ENCODE measurements at regions of chr17 and their contacts with region 1.

Region 1: DNA sequence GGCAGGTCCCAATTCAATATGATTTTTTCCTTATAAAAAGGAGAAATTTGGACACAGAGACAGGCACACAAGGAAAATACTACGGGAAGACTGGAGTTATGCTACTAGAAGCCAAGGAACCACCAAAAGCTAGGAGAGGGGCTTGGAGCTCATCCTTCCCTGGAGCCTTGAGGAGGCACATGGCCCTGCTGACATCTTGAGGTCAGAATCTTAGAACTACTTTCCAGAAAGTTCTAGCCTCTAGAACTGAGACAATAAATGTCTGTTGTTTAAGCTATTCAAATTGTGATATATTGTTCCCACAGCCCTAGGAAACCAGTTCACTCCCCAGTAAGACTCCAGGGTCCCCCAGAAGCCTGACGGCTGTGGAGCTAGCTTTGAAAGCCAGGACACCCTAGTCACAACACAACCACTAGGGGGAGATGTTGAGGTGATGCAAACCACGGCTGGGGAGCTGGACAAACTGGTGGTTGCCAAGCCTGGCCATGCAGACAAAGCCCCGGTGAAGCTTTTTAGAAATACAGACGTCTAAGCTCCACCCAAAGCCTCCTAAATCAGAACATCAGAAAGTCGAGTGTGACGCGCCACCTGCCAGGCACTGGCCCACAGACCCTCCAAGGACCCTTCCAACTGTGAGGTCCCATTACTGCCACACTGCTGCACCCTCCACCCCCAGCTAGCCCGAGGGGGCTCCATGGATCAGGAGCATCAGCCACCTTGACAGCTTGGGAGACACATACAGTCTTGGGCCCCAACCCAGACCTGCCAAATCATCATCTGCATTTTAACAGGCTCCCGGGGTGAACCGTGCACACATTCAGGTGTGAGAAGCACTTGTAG is 106.4 kb downstream of the SLC39A11 start:
- DNase-seq: peak; percentile 7 to 72 (median 34)
- ATAC-seq: peak; percentile 41
- H3K4me3 ChIP-seq: no peak overlapping the region
- H3K4me3 Mint-ChIP-seq: no peak overlapping the region
- H3K27ac ChIP-seq: no peak overlapping the region
- H3K27ac Mint-ChIP-seq: no peak overlapping the region
- H3K4me1 ChIP-seq: peaks cover 6% of the 10 kb centered on the region
- H3K4me1 Mint-ChIP-seq: peaks cover 6% of the 10 kb centered on the region
- H3K27me3 ChIP-seq: no peaks in the 10 kb centered on the region
- H3K27me3 Mint-ChIP-seq: no peaks in the 10 kb centered on the region
- CTCF ChIP-seq: peak; percentile 78

Region 2: DNA sequence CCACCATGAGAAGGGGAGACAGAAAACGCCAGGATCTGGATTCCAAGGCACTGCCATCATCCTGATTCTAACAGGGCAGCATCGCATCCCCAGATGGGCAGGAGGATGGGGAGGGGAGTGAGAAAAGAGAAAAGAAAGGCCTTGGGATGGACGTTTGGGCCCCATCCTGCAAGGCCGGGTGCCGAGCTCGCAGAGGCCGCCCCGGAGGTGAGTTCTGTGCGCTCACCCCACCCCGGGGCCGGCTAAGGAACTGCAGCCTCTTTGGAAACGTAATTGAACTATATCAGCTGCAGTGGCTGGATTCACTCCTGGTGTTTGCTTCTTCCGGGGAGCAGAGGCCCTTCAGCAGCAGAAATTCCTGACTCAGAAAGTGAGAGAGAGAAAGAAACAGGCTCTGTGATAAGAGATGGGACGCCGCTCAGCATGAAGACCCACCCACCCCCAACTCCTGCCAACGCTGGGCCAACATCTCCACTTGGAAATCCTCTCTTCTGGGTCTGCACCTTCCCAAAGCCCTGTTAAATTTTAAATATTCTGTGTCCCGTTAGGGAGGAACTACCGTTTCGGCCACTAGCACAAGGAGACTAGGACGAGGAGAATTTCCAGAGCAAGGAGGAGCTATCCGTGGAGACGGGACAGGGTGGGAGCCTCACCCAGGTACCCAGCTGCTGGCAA is 170.2 kb after region 1 on chr17:
- CTCF ChIA-PET with region 1: interaction called, 4 read pairs
- POLR2A ChIA-PET with region 1: no interaction called
- intact Hi-C with region 1: loop called in 1 of 2 experiments (anchors 5 kb)
- DNase-seq: peak in 13 of 14 experiments; percentile 14 to 72 (median 43)
- ATAC-seq: peak; percentile 90
- H3K4me3 ChIP-seq: no peak overlapping the region
- H3K4me3 Mint-ChIP-seq: no peak overlapping the region
- H3K27ac ChIP-seq: no peak overlapping the region
- H3K27ac Mint-ChIP-seq: no peak overlapping the region
- H3K4me1 ChIP-seq: peaks cover 6% of the 10 kb centered on the region
- H3K4me1 Mint-ChIP-seq: peaks cover 15% of the 10 kb centered on the region
- H3K27me3 ChIP-seq: peaks cover 3 to 13% of the 10 kb centered on the region in 2 experiments
- H3K27me3 Mint-ChIP-seq: peaks cover 34% of the 10 kb centered on the region
- CTCF ChIP-seq: peak; percentile 70

Region 3: GRCh38 chr17:73371285-73371684 is 385.2 kb after region 1 on chr17:
- CTCF ChIA-PET with region 1: no interaction called
- POLR2A ChIA-PET with region 1: interaction called, 3 read pairs
- intact Hi-C with region 1: loop called in 1 of 2 experiments (anchors 5 kb)
- DNase-seq: no peak
- ATAC-seq: no peak
- H3K4me3 ChIP-seq: no peak overlapping the region
- H3K4me3 Mint-ChIP-seq: no peak overlapping the region
- H3K27ac ChIP-seq: no peak overlapping the region
- H3K27ac Mint-ChIP-seq: no peak overlapping the region
- H3K4me1 ChIP-seq: no peaks in the 10 kb centered on the region
- H3K4me1 Mint-ChIP-seq: no peaks in the 10 kb centered on the region
- H3K27me3 ChIP-seq: no peaks in the 10 kb centered on the region
- H3K27me3 Mint-ChIP-seq: no peaks in the 10 kb centered on the region
- CTCF ChIP-seq: no peak